ENCODE measurements at regions of chr6 and their contacts with region 1.

Region 1: DNA sequence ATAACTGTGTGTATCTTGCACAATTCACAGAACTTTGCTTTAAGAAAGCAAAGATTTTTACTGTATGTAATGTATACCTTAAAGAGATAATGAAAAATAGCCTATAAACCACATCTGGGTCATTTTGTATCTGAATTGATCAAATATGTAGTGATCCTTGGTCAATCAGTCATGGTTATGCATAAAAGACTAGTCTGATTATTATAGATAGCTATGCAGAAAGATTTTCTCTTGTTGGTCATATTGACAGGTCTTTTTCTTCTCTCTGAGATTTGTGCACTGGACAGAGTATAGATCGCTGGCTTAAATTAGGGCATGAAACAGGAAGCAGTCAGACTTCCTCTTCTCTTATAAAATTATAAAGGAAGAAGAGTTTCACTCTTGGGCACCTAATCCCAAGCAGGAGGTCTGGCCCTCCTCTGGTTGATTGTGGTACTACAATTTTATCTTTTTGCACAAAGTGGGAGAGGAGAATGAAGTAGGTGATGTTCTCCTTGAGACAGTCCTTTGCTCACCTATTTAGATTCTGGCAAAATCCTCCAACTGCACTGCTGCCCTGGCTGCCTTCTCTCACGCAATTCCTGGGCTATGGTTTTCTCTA is 380.9 kb upstream of the RGS17 start:
- DNase-seq: no peak
- H3K4me3 ChIP-seq: no peak overlapping the region
- H3K27ac ChIP-seq: no peak overlapping the region
- H3K4me1 ChIP-seq: no peaks in the 10 kb centered on the region
- H3K27me3 ChIP-seq: no peaks in the 10 kb centered on the region
- CTCF ChIP-seq: peak; percentile 10 to 27 (median 10)
- POLR2A ChIP-seq: no peak

Region 2: DNA sequence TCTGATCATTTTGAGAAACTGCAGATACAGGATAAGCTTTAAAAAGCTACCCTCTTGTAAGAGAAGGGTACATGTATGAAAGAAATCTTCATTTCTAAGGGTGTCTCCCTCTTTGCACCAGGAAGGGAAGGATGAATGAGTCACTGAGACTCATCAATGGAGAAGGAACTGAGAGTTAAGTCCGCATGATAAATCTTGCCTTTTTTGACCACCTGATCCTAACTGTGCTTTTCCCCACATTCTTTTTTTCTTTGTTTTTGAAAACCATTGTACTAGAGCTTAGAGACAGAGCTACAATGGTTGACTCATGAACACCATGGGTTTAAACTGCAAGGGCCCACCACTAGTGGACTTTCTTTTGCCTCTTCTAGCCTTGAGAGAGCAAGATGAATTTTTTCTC is 27.9 kb before region 1 on chr6:
- intact Hi-C with region 1: no loop called
- DNase-seq: no peak
- H3K4me3 ChIP-seq: no peak overlapping the region
- H3K27ac ChIP-seq: no peak overlapping the region
- H3K4me1 ChIP-seq: no peaks in the 10 kb centered on the region
- H3K27me3 ChIP-seq: no peaks in the 10 kb centered on the region
- CTCF ChIP-seq: no peak
- POLR2A ChIP-seq: no peak

Region 3: GRCh38 chr6:153568628-153569027 is 56.6 kb after region 1 on chr6:
- intact Hi-C with region 1: loop called (anchors 5 kb)
- DNase-seq: no peak
- H3K4me3 ChIP-seq: no peak overlapping the region
- H3K27ac ChIP-seq: no peak overlapping the region
- H3K4me1 ChIP-seq: no peaks in the 10 kb centered on the region
- H3K27me3 ChIP-seq: no peaks in the 10 kb centered on the region
- CTCF ChIP-seq: no peak
- POLR2A ChIP-seq: no peak

Measured in breast epithelium (tissue), 4 donors.